K562 (cell line): ENCODE measurements at regions of chr3 and their contacts with region 1.

Region 1: DNA sequence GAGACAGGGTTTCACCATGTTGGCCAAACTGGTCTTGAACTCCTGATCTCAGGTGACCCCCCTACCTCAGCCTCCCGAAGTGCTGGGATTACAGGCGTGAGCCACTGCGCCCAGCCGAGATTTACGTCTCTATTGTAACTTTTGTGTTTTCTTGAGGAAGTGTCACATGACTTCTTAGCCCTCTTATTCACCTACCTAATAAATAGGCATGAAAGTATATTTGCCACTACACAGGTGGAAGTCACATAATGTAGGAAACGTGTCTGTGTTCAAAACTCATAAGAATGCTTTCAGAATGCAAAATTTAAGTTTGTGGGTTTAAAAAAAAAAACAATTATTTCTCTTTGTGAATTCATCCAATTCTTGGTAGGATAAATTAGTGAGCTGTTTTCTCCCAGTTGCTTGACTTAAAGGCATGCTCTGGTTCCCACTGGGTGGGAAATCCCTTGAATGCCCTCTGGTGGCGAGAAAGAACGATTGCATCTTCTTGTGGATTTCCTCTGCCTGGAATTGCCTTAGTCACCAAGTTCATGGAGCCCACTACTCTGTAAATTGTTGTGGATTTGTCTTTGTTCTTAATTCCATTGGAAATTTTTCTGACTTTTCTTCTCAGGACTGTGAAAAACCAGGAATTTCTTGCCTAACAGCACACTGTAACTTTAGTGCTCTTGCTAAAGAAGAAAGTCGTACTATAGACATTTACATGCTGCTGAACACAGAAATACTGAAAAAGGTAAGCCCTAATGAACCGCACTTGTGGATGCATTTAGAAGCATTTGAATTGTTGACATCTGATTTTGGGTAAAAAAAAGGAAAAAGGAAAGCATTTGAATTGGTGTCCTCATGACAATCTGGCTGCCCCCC is 82.2 kb upstream of the CTDSPL start:
- DNase-seq: peak; percentile 82 to 90 (median 84)
- ATAC-seq: peak; percentile 98
- H3K4me3 ChIP-seq: no peak overlapping the region
- H3K27ac ChIP-seq: no peak overlapping the region
- H3K4me1 ChIP-seq: no peaks in the 10 kb centered on the region
- H3K27me3 ChIP-seq: peaks cover 0 to 11% of the 10 kb centered on the region in 2 experiments; a peak in 1 of 5 replicates
- CTCF ChIP-seq: peak; percentile 84 to 96 (median 86)
- EP300 ChIP-seq: no peak
- POLR2A ChIP-seq: no peak
- RAD21 ChIP-seq: peak; percentile 91 to 97

Region 2: DNA sequence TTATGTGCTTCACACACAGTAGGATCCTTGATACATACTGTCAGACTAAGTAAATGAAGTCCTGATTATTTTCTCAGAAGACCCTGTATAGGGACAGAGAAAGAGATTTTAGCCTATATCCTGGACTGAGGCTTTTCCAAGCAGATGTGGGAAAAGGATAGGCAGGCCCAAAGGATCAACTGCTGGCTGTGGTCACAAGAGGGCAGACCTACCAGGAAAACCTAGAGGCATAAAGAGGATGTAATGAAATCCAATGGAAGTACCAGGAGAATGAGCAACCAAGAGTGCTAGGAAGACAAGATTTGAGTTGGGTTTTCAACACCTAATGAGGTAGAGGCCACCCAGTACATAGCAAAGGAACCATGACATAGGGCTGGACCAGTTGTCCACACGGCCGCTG is 1038.2 kb before region 1 on chr3:
- CTCF ChIA-PET with region 1: no interaction called
- POLR2A ChIA-PET with region 1: no interaction called
- in situ Hi-C with region 1: loop called (anchors 10 kb)
- intact Hi-C with region 1: no loop called
- DNase-seq: no peak
- ATAC-seq: 0 out of 3 replicates have a peak, but pooled peaks have one; percentile 26
- H3K4me3 ChIP-seq: no peak overlapping the region
- H3K27ac ChIP-seq: no peak overlapping the region
- H3K4me1 ChIP-seq: peaks cover 0 to 3% of the 10 kb centered on the region in 2 experiments; a peak in 1 of 5 replicates
- H3K27me3 ChIP-seq: peaks cover 5 to 20% of the 10 kb centered on the region in 2 experiments; a peak in 4 of 5 replicates
- CTCF ChIP-seq: peak; percentile 2 to 44 (median 27); a peak in 2 of 6 replicates
- EP300 ChIP-seq: no peak
- POLR2A ChIP-seq: no peak
- RAD21 ChIP-seq: peak in 1 of 2 experiments; percentile 29; a peak in 2 of 4 replicates

Region 3: DNA sequence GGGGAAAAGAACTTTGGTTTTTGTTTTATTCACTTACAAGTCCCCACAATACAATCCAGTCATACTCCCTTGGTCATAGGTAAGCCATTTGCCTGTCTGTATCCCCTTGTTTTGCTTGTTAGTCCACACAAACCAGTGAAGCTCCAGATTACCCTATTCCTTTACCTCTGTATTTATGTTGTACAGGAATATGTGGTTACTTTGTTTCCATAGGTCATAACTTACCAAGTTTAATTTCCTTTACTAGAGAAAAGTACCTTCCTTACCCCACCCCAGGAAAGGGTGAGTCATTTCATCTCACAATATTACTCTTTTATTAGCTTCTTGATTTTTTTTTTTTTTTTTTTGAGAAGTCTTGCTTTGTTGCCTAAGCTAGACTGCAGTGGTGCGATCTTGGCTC is 491.7 kb before region 1 on chr3:
- CTCF ChIA-PET with region 1: no interaction called
- POLR2A ChIA-PET with region 1: no interaction called
- in situ Hi-C with region 1: no loop called
- intact Hi-C with region 1: no loop called
- DNase-seq: no peak
- ATAC-seq: no peak
- H3K4me3 ChIP-seq: no peak overlapping the region
- H3K27ac ChIP-seq: no peak overlapping the region
- H3K4me1 ChIP-seq: peaks cover 4 to 21% of the 10 kb centered on the region in 2 experiments; a peak in 2 of 5 replicates
- H3K27me3 ChIP-seq: no peaks in the 10 kb centered on the region
- CTCF ChIP-seq: no peak
- EP300 ChIP-seq: no peak
- POLR2A ChIP-seq: no peak
- RAD21 ChIP-seq: no peak

Region 4: DNA sequence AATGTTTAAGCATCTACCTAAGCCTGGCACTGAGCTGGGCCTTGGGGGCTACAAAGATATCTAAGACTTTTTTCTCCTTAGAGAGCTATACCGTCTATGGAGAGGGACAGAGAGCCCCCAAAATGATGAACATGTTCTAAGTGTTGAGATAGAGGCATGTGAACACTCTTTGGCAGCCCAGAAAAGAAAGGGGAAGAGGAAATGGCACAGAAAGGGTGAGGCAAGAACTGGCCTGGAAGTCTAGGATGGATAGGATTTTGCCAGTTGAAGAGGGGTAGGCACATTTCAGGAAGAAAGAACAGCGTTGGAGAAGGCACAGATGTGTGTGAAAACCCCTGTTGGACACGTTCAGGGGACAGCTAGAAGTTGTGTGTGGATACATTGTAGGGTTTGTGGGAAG is 329.0 kb before region 1 on chr3:
- CTCF ChIA-PET with region 1: no interaction called
- POLR2A ChIA-PET with region 1: no interaction called
- in situ Hi-C with region 1: no loop called
- intact Hi-C with region 1: loop called (anchors 1 kb)
- DNase-seq: no peak
- ATAC-seq: no peak
- H3K4me3 ChIP-seq: no peak overlapping the region
- H3K27ac ChIP-seq: no peak overlapping the region
- H3K4me1 ChIP-seq: peaks cover 3 to 16% of the 10 kb centered on the region in 2 experiments; a peak in 4 of 5 replicates
- H3K27me3 ChIP-seq: peaks cover 34 to 47% of the 10 kb centered on the region in 2 experiments
- CTCF ChIP-seq: no peak
- EP300 ChIP-seq: no peak
- POLR2A ChIP-seq: no peak
- RAD21 ChIP-seq: no peak

Region 5: DNA sequence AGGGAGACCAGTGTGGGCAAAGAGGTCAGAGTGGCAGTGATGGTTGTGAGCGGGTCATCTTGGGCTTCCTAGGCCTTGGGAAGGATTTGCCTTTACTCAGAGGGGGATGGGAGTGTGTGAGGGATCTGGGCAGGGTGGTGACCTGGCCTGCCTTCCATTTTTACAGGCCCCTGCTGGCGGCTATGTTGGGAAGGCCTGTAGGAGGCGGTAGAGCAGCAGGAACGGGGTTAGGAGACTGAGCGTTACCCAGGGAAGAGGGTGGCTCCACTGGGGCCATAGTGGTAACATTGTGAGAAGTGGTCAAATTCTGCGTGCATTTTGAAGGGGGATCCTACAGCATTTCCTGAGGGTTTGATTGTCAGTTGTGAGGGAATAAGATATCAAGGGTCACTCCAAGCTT is 225.2 kb before region 1 on chr3:
- CTCF ChIA-PET with region 1: interaction called, 20 read pairs
- POLR2A ChIA-PET with region 1: no interaction called
- in situ Hi-C with region 1: no loop called
- intact Hi-C with region 1: loop called (anchors 1 kb)
- DNase-seq: peak; percentile 49 to 74 (median 54)
- ATAC-seq: peak; percentile 95
- H3K4me3 ChIP-seq: no peak overlapping the region
- H3K27ac ChIP-seq: no peak overlapping the region
- H3K4me1 ChIP-seq: no peaks in the 10 kb centered on the region
- H3K27me3 ChIP-seq: peaks cover 12 to 23% of the 10 kb centered on the region in 2 experiments; a peak in 4 of 5 replicates
- CTCF ChIP-seq: peak; percentile 82 to 89 (median 87)
- EP300 ChIP-seq: no peak
- POLR2A ChIP-seq: no peak
- RAD21 ChIP-seq: peak; percentile 77 to 84

Region 6: DNA sequence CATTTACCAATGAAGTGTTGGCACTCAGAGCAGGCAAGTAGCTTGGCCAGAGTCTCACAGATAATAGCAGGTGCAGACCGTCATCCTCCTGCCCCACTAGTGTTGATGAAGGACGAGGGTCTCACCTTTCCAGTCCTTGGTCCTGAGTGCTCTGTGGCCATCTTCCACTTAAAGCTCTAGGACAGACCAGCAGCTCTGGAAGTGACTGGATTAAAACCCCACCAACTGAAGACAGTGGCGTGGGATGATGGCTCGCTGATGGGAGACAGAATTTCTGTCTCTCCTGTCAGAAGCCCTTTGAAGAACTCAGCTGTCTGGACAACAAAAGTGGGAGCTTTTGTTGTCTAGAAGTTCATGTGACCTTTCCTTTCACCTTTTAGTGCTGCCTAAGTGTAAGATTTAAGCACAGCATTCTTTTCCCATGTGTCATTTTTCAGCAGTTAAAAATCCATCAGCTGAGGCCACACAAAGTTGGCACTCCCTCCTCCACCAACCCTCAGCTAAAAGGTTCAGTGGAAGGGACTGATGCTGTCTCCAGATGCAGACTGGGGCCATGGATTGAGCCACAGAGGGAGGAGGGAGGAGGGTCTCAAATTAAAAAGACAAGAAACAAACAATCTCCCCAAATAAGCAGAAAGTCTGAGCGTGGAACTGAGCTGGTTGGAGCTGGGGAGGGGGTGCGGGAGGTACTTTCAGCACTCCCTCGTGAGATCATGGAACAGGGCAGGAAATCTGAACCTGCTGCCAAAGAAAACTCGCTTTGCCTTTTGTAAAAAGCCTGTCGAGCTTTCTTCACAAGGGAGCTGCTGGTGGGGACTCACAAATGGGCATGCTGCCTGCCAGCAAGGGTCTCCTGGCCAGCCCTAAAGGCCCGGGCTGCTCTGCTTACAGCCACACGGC is 66.4 kb before region 1 on chr3:
- CTCF ChIA-PET with region 1: interaction called, 3 read pairs
- POLR2A ChIA-PET with region 1: interaction called, 3 read pairs
- in situ Hi-C with region 1: no loop called
- intact Hi-C with region 1: loop called (anchors 5 kb)
- DNase-seq: no peak
- ATAC-seq: no peak
- H3K4me3 ChIP-seq: no peak overlapping the region
- H3K27ac ChIP-seq: no peak overlapping the region
- H3K4me1 ChIP-seq: no peaks in the 10 kb centered on the region
- H3K27me3 ChIP-seq: peaks cover 12 to 45% of the 10 kb centered on the region in 2 experiments
- CTCF ChIP-seq: no peak
- EP300 ChIP-seq: no peak
- POLR2A ChIP-seq: no peak
- RAD21 ChIP-seq: no peak